Mammary epithelial cell (primary cell): ENCODE measurements at regions of chr2 and their contacts with region 1.

Region 1: GRCh38 chr2:21317131-21317530 is 193.4 kb downstream of the TDRD15 start:
- DNase-seq: peak; percentile 21
- H3K4me3 ChIP-seq: no peak overlapping the region
- H3K27ac ChIP-seq: no peak overlapping the region
- H3K4me1 ChIP-seq: no peaks in the 10 kb centered on the region
- H3K27me3 ChIP-seq: no peaks in the 10 kb centered on the region
- CTCF ChIP-seq: peak; percentile 69 to 75

Region 2: DNA sequence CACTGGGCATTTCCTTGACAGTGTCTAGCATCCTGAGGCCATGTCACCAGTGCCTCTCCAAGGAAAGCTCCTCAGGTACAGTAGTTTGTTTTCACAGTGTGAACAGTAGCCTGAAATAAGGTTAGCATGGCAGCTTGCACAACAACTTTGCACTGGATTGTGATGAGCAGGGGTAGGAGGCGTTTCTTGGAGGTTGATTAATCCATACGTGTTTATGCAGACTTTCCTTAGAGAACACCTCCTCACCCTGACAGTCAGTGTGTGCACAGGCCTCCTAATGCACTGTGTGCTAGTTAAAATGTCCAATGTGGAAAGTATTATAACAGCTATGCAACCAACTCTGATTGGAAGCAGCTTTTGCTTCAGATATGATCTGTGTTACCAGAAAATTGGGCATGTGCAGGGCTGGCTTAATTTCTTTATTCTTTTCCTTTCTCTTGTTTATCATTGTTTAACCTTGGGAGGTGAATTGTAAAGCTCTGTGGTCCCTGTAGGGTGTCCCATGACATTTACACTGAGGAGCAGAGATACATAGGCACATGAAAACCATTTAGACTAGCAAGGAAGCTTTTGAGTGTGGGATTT is 417.0 kb before region 1 on chr2:
- CTCF ChIA-PET with region 1: no interaction called
- dilution Hi-C with region 1: no loop called
- in situ Hi-C with region 1: no loop called
- intact Hi-C with region 1: no loop called
- DNase-seq: no peak
- H3K4me3 ChIP-seq: no peak overlapping the region
- H3K27ac ChIP-seq: no peak overlapping the region
- H3K4me1 ChIP-seq: no peaks in the 10 kb centered on the region
- H3K27me3 ChIP-seq: no peaks in the 10 kb centered on the region
- CTCF ChIP-seq: no peak

Region 3: DNA sequence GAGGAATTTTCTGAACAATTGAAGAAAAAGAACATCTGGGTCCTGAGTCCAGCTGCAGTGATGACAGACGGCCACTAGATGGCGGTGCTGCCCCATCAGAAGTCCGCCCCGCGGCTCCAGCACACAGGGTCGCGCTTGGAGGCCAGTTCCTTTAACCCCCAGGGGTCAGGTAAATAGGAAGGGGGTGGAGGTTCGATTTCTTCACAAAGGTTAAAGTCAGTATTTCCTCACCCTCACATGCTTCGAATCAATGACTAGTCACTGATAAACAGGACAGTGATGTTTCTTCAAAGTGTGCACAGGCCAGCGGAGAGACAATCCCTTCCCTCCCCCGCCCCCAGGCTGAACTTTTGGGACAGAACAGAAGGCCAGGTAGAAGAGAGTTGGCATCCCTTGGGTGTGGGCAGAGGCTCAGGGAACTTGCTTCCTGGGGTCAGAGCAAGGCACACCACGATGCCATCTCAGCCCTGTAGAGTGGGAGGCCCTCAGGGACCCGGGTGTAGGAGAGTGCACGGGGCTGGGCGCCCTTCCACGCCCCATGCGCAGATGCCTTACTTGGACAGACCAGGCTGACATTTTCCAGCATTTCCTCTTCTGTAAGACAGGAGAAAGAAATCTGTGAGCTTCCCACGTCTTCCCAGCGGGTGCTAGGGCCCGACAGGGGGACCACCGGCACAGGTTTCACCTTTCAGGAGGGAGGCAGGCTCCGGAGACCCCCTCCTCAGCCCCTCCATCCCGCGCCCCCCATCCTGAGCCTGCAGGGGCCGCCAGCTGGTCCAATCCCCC is 274.0 kb before region 1 on chr2:
- CTCF ChIA-PET with region 1: interaction called, 3 read pairs
- dilution Hi-C with region 1: no loop called
- in situ Hi-C with region 1: loop called in 1 of 2 experiments (anchors 25 kb)
- intact Hi-C with region 1: loop called (anchors 1 kb)
- DNase-seq: peak; percentile 5
- H3K4me3 ChIP-seq: no peak overlapping the region
- H3K27ac ChIP-seq: no peak overlapping the region
- H3K4me1 ChIP-seq: no peaks in the 10 kb centered on the region
- H3K27me3 ChIP-seq: peaks cover 1% of the 10 kb centered on the region
- CTCF ChIP-seq: peak; percentile 86 to 98

Region 4: DNA sequence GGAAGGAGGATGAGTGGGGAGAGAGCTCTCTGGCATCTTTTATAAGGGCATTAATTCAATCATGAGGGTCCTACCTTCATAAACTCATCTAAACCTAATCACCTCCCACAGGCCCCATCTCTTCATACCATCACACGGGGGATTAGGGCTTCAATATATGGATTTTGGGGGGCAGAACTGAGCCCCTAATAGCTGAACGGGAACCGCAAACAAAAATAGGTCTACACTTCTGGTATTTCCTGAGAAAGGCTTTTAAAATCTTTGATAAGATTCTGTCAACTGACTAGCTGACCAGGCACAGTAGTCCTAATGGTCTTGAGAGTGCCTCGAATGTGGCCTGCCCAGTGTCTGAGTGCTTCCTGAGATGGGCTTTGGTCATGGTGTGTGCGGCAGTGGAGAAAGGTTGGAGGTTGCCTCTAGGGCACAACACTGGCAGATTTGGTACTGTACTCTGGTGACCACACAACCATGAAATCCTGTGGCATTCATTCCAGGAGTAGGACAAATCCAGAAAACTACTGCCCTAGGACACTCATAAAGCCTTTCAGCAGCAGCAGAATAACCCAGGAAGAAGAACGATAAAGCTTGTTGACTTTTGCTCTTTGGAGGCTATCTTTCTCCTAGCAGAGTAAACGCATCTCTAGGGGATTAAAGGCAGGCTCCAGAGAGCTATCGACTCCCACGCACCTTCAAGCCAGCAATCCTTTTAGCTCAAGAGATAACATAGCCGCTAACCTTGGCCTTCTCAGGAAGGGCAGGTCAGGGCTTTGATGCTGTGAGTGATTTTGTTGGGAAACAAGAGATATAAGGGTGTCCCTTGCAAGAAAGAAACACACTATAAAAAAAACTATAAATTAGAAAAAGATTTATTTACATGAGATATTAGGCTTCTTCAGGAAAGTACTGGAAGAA is 261.0 kb before region 1 on chr2:
- CTCF ChIA-PET with region 1: no interaction called
- dilution Hi-C with region 1: loop called (anchors 5 kb)
- in situ Hi-C with region 1: no loop called
- intact Hi-C with region 1: no loop called
- DNase-seq: no peak
- H3K4me3 ChIP-seq: no peak overlapping the region
- H3K27ac ChIP-seq: no peak overlapping the region
- H3K4me1 ChIP-seq: no peaks in the 10 kb centered on the region
- H3K27me3 ChIP-seq: no peaks in the 10 kb centered on the region
- CTCF ChIP-seq: no peak

Region 5: GRCh38 chr2:21165350-21165749 is 151.8 kb before region 1 on chr2:
- CTCF ChIA-PET with region 1: no interaction called
- dilution Hi-C with region 1: loop called (anchors 25 kb)
- in situ Hi-C with region 1: no loop called
- intact Hi-C with region 1: no loop called
- DNase-seq: no peak
- H3K4me3 ChIP-seq: no peak overlapping the region
- H3K27ac ChIP-seq: no peak overlapping the region
- H3K4me1 ChIP-seq: no peaks in the 10 kb centered on the region
- H3K27me3 ChIP-seq: no peaks in the 10 kb centered on the region
- CTCF ChIP-seq: peak; percentile 17 to 37

Region 6: GRCh38 chr2:21175895-21176646 is 141.1 kb before region 1 on chr2:
- CTCF ChIA-PET with region 1: interaction called, 3 read pairs
- dilution Hi-C with region 1: loop called (anchors 25 kb)
- in situ Hi-C with region 1: loop called in 1 of 2 experiments (anchors 25 kb)
- intact Hi-C with region 1: loop called (anchors 1 kb)
- DNase-seq: no peak
- H3K4me3 ChIP-seq: no peak overlapping the region
- H3K27ac ChIP-seq: no peak overlapping the region
- H3K4me1 ChIP-seq: no peaks in the 10 kb centered on the region
- H3K27me3 ChIP-seq: no peaks in the 10 kb centered on the region
- CTCF ChIP-seq: peak; percentile 19 to 41

Region 7: GRCh38 chr2:21217442-21217841 is 99.7 kb before region 1 on chr2:
- CTCF ChIA-PET with region 1: no interaction called
- dilution Hi-C with region 1: no loop called
- in situ Hi-C with region 1: no loop called
- intact Hi-C with region 1: no loop called
- DNase-seq: no peak
- H3K4me3 ChIP-seq: no peak overlapping the region
- H3K27ac ChIP-seq: no peak overlapping the region
- H3K4me1 ChIP-seq: no peaks in the 10 kb centered on the region
- H3K27me3 ChIP-seq: no peaks in the 10 kb centered on the region
- CTCF ChIP-seq: no peak

Region 8: DNA sequence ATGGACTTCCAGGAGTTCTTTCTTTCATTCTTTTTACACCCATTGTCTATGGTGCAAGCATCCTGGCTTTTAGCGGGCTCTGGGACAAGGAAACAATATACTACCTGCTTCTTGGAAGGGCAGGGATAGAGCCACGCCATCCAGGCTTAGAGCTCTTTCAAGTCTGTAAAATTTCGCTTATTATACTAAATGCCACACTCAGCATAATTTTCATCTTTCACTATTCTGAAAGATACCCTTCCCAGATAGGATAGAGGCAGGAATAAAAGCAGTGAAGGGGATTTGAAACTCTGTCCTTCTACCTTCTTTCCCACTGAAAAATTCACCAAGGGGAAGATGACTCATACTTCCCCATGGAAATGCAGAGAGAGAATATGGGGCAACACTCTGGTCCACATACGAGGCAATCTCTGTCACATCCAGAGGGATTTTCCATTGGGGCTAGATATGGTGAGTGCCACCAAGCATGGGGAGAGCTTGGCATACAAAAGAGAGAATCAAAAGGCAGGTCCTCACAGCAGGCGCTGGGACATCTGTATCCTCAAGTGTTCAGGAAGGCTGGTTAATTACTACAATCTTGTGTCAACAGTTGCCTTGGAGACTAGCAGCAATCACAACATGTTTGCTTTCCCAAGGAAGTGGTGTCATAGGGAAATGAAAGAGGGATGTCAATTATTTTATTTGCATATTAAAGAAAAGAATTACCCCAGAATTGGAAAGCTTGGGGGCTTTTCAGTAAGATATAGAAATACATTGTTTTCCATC is 65.7 kb before region 1 on chr2:
- CTCF ChIA-PET with region 1: no interaction called
- dilution Hi-C with region 1: no loop called
- in situ Hi-C with region 1: no loop called
- intact Hi-C with region 1: no loop called
- DNase-seq: no peak
- H3K4me3 ChIP-seq: no peak overlapping the region
- H3K27ac ChIP-seq: no peak overlapping the region
- H3K4me1 ChIP-seq: peaks cover 10% of the 10 kb centered on the region
- H3K27me3 ChIP-seq: no peaks in the 10 kb centered on the region
- CTCF ChIP-seq: no peak

Region 9: DNA sequence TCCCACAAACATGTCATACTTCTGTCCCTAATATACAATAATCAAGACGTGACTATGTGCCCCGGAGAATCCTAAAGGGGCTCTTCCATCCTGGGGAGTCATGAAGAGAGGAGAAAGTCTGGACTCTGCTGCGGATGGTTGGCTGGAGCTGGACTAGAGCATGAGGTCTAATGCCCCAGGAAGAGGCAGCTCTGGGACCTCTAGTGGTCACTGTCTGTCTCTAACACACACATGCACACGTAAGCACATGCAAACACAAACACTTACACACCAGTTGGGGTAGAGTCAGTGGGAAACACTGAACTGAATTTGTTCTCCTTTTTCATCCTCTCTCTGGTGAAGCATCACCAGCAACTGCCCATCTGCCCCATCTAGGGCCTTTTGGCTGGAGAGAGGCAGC is 78.2 kb after region 1 on chr2:
- CTCF ChIA-PET with region 1: no interaction called
- dilution Hi-C with region 1: no loop called
- in situ Hi-C with region 1: no loop called
- intact Hi-C with region 1: loop called (anchors 1 kb)
- DNase-seq: no peak
- H3K4me3 ChIP-seq: no peak overlapping the region
- H3K27ac ChIP-seq: no peak overlapping the region
- H3K4me1 ChIP-seq: no peaks in the 10 kb centered on the region
- H3K27me3 ChIP-seq: no peaks in the 10 kb centered on the region
- CTCF ChIP-seq: peak; percentile 20 to 39